Caco-2 (cell line): ENCODE measurements at regions of chr10 and their contacts with region 1.

Region 1: GRCh38 chr10:13659897-13660550 is 73.3 kb downstream of the PRPF18 start:
- DNase-seq: peak; percentile 70 to 78
- H3K4me3 ChIP-seq: no peak overlapping the region
- H3K4me3 Mint-ChIP-seq: no peak overlapping the region
- H3K27ac Mint-ChIP-seq: peak overlapping the region; percentile 14
- H3K4me1 ChIP-seq: no peaks in the 10 kb centered on the region
- H3K4me1 Mint-ChIP-seq: peaks cover 16% of the 10 kb centered on the region
- H3K27me3 ChIP-seq: no peaks in the 10 kb centered on the region
- H3K27me3 Mint-ChIP-seq: no peaks in the 10 kb centered on the region
- CTCF ChIP-seq: peak; percentile 96 to 98

Region 2: GRCh38 chr10:13758312-13758711 is 98.3 kb after region 1 on chr10:
- CTCF ChIA-PET with region 1: no interaction called
- POLR2A ChIA-PET with region 1: no interaction called
- intact Hi-C with region 1: no loop called
- DNase-seq: peak; percentile 55 to 79
- H3K4me3 ChIP-seq: no peak overlapping the region
- H3K4me3 Mint-ChIP-seq: no peak overlapping the region
- H3K27ac Mint-ChIP-seq: no peak overlapping the region
- H3K4me1 ChIP-seq: peaks cover 60% of the 10 kb centered on the region
- H3K4me1 Mint-ChIP-seq: peaks cover 46% of the 10 kb centered on the region
- H3K27me3 ChIP-seq: no peaks in the 10 kb centered on the region
- H3K27me3 Mint-ChIP-seq: no peaks in the 10 kb centered on the region
- CTCF ChIP-seq: no peak

Region 3: GRCh38 chr10:13776861-13777311 is 116.9 kb after region 1 on chr10:
- CTCF ChIA-PET with region 1: interaction called, 4 read pairs
- POLR2A ChIA-PET with region 1: no interaction called
- intact Hi-C with region 1: loop called (anchors 1 kb)
- DNase-seq: no peak
- H3K4me3 ChIP-seq: no peak overlapping the region
- H3K4me3 Mint-ChIP-seq: no peak overlapping the region
- H3K27ac Mint-ChIP-seq: no peak overlapping the region
- H3K4me1 ChIP-seq: peaks cover 19% of the 10 kb centered on the region
- H3K4me1 Mint-ChIP-seq: peaks cover 13% of the 10 kb centered on the region
- H3K27me3 ChIP-seq: no peaks in the 10 kb centered on the region
- H3K27me3 Mint-ChIP-seq: no peaks in the 10 kb centered on the region
- CTCF ChIP-seq: no peak